ENCODE measurements at regions of chr9 and their contacts with region 1.

Region 1: GRCh38 chr9:136614372-136614922 is 48.3 kb upstream of the EGFL7 start:
- DNase-seq: no peak
- H3K4me3 ChIP-seq: no peak overlapping the region; the same call in 1 of the 2 replicates
- CTCF ChIP-seq: no peak

Region 2: GRCh38 chr9:136625101-136626060 is 10.9 kb after region 1 on chr9:
- CTCF ChIA-PET with region 1: interaction called, 11 read pairs
- POLR2A ChIA-PET with region 1: interaction called, 5 read pairs
- DNase-seq: no peak
- H3K4me3 ChIP-seq: no peak overlapping the region
- CTCF ChIP-seq: peak; percentile 59

Measured in AG04449 (cell line).